ENCODE measurements at regions of chr17 and their contacts with region 1.

Region 1: DNA sequence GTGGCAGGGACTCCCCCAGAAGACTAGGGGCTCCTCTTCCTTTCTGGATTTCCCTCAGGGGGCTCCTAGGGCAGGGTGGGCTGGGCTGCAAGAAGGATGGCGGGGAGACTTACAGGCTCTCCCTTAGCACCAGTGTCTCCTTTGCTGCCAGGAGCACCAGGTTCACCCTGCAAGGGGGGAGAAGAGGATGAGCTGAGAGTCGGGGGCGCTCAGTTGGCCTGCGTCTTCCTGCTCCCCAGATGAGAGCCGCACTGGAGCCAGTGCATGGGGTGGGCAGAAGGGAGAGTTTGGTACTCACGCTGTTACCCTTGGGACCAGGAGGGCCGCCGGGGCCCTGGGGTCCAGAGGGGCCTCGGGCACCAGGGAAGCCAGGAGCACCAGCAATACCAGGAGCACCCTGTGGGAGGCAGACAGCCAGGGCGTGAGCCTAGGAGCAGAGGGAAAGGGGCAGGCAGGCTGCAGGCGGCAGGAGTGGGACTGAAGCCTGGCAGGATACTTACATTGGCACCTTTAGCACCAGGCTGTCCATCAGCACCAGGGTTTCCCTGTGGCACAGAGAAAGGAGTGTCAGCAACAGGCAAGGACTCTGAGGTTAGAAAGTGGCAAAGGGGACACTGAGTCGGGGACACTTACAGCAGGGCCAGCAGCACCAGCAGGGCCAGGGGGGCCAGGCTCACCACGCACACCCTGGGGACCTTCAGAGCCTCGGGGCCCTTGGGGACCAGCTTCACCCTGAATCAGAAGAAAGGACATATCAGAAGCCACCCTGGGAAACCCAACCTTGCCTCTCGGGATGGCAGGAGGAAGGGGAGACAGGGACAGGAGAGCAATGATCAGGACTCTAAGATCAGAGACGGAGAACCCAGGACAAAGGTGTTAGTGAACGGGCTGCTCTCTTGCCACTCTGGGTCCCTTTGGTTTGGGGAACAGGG is 6.2 kb downstream of the COL1A1 start:
- DNase-seq: no peak
- CTCF ChIP-seq: no peak

Region 2: GRCh38 chr17:49677933-49678847 is 517.0 kb before region 1 on chr17 and contains the start of gene SPOP:
- CTCF ChIA-PET with region 1: no interaction called
- POLR2A ChIA-PET with region 1: no interaction called
- DNase-seq: peak; percentile 98
- CTCF ChIP-seq: no peak

Region 3: GRCh38 chr17:50184611-50185398 is 10.4 kb before region 1 on chr17:
- CTCF ChIA-PET with region 1: interaction called, 33 read pairs
- POLR2A ChIA-PET with region 1: no interaction called
- DNase-seq: peak; percentile 51
- CTCF ChIP-seq: no peak